ENCODE measurements at regions of chr12 and their contacts with region 1.

Region 1: GRCh38 chr12:2845280-2845679 is 10.4 kb upstream of the NRIP2 start:
- DNase-seq: no peak
- H3K4me3 Mint-ChIP-seq: no peak overlapping the region
- H3K27ac Mint-ChIP-seq: no peak overlapping the region
- H3K4me1 Mint-ChIP-seq: no peaks in the 10 kb centered on the region
- H3K27me3 Mint-ChIP-seq: no peaks in the 10 kb centered on the region

Region 2: GRCh38 chr12:2944401-2945047 is 99.2 kb after region 1 on chr12:
- CTCF ChIA-PET with region 1: interaction called, 20 read pairs
- POLR2A ChIA-PET with region 1: no interaction called
- intact Hi-C with region 1: no loop called
- DNase-seq: peak; percentile 79
- H3K4me3 Mint-ChIP-seq: peak overlapping the region; percentile 14
- H3K27ac Mint-ChIP-seq: no peak overlapping the region
- H3K4me1 Mint-ChIP-seq: no peaks in the 10 kb centered on the region
- H3K27me3 Mint-ChIP-seq: no peaks in the 10 kb centered on the region

Region 3: DNA sequence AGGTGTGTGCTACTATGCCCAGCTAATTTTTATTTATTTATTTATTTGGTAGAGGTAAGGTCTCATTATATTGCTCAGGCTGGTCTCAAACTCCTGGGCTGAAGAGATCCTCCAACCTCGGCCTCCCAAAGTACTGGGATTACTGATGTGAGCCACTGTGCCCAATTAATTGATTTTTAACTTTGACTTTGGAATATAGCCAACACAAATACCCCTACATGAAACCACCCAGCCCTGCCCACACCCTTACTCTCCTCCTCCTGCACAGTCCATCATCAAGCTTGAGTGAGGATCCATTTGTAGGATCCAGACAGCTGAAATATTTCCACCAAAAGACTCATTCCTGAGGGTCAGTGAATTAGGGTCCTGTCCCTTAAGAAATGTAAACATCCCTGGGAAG is 110.6 kb after region 1 on chr12:
- CTCF ChIA-PET with region 1: no interaction called
- POLR2A ChIA-PET with region 1: no interaction called
- intact Hi-C with region 1: no loop called
- DNase-seq: no peak
- H3K4me3 Mint-ChIP-seq: no peak overlapping the region
- H3K27ac Mint-ChIP-seq: no peak overlapping the region
- H3K4me1 Mint-ChIP-seq: peaks cover 18% of the 10 kb centered on the region
- H3K27me3 Mint-ChIP-seq: peaks cover 29% of the 10 kb centered on the region

Region 4: DNA sequence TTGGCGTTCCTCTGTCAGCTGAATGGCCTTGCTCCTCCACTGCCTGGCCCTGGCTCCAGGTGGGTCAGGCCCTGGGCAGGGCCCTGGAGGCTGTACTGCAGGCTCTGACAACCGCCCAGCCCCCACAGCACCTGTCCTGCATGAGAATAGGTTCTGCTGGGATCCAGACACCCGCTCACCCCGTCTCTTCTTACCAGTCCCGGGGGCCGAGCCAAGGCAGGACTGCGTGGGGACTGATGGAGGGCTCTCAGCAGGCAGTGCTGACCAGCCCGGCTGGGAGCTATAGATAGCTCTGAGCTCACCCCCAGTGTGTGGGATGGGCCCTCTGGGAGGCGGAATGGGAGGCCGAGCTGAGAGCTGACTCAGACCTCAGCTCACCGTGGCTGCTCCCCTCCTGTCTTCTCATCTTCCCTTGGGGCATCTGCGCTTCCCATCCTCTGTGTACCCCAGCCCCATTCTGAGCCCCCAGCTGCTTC is 153.5 kb after region 1 on chr12:
- CTCF ChIA-PET with region 1: no interaction called
- POLR2A ChIA-PET with region 1: no interaction called
- intact Hi-C with region 1: no loop called
- DNase-seq: no peak
- H3K4me3 Mint-ChIP-seq: no peak overlapping the region
- H3K27ac Mint-ChIP-seq: no peak overlapping the region
- H3K4me1 Mint-ChIP-seq: no peaks in the 10 kb centered on the region
- H3K27me3 Mint-ChIP-seq: peaks cover 2% of the 10 kb centered on the region

Region 5: GRCh38 chr12:3034067-3034750 is 188.9 kb after region 1 on chr12:
- CTCF ChIA-PET with region 1: no interaction called
- POLR2A ChIA-PET with region 1: no interaction called
- intact Hi-C with region 1: loop called (anchors 5 kb)
- DNase-seq: peak; percentile 63
- H3K4me3 Mint-ChIP-seq: no peak overlapping the region
- H3K27ac Mint-ChIP-seq: no peak overlapping the region
- H3K4me1 Mint-ChIP-seq: no peaks in the 10 kb centered on the region
- H3K27me3 Mint-ChIP-seq: peaks cover 3% of the 10 kb centered on the region